GM18951 (cell line): ENCODE measurements at regions of chr11 and their contacts with region 1.

Region 1: DNA sequence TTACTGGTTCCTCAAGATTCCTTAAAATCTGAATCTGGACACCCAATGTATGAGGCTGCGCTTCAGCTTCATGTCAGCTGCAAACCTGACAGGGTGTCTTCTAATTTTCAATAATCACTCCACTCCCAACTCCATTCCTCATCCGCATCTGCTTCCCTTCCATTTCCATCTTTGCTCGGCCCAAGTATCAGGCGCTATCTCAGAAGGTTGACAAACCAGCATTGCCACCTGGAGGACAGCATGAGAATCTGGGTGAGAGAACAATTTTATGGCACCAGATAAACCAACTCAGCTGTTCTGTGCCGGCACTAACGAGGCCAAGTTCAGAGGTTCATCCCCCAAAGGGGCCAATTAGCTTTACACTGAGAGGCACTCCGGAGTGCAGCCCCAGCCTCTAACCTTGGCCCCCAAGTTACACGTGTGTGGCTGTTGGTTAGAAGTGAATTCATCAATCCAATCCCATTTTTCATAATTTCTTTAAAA is 79.1 kb upstream of the LMO2 start:
- POLR2A ChIP-seq: no peak

Region 2: DNA sequence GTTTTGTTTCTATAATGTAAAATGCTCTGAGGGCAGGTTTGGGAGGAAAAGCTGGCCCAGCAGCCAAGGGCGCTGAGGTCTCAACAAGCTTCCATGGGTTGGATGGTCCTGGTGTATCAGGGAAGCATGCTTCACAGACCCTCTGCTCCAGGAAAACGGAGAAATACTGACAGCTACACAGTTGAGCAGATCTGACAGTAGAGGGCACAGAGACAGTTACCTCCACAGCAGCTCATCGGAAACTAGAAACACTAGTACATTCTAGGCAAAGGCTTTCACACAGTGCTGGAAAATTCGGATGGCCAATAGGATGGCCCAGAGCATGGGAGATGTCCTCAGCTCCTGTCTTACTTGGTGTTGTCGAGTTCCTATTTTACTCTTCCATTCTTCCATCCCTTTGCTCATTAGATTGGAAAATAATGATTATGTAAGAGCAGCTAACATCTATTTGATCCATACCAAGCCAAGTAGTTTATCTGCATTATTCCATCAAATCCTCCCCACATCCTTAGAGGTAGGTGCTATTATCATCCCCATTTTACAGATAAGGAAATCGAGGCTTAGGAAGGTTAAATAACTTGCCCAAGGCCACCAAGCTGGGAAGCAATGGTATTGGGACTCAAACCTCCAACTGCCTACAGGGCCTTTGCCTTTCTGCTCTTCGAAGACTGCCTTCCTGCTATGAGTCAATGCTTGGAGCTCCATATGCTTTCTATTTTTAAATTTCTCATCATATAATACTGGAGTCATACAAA is 107.4 kb before region 1 on chr11:
- in situ Hi-C with region 1: loop called (anchors 5 kb)
- POLR2A ChIP-seq: no peak